ENCODE measurements at regions of chr12 and their contacts with region 1.

Region 1: GRCh38 chr12:61502179-61502578 is 758.0 kb upstream of the USP15 start:
- DNase-seq: no peak
- H3K4me3 ChIP-seq: no peak overlapping the region
- H3K27ac ChIP-seq: no peak overlapping the region
- H3K4me1 ChIP-seq: no peaks in the 10 kb centered on the region
- CTCF ChIP-seq: no peak

Region 2: DNA sequence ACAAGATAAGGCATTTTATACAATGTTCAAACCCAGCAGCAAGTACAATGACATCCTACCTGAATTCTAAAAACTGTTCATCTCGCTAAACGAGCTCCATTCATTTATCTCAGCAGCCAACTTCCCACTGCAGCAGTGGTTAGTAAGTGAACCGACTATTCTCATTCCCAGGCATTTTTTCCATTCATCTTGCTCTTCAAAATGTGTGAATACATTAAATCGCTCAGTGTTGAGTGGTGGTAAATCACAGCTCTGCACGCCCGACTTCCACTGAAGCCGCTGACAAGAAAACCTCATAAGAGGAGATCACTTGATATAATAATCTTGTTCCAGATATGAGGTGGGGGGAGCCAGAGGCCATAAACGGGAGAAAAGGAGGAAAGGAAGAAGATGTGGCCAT is 11.8 kb after region 1 on chr12:
- CTCF ChIA-PET with region 1: no interaction called
- POLR2A ChIA-PET with region 1: interaction called, 23 read pairs
- intact Hi-C with region 1: no loop called
- DNase-seq: no peak
- H3K4me3 ChIP-seq: no peak overlapping the region
- H3K27ac ChIP-seq: no peak overlapping the region
- H3K4me1 ChIP-seq: peaks cover 59% of the 10 kb centered on the region
- CTCF ChIP-seq: no peak